Brain microvascular endothelial cell (primary cell): ENCODE measurements at regions of chr5 and their contacts with region 1.

Region 1: DNA sequence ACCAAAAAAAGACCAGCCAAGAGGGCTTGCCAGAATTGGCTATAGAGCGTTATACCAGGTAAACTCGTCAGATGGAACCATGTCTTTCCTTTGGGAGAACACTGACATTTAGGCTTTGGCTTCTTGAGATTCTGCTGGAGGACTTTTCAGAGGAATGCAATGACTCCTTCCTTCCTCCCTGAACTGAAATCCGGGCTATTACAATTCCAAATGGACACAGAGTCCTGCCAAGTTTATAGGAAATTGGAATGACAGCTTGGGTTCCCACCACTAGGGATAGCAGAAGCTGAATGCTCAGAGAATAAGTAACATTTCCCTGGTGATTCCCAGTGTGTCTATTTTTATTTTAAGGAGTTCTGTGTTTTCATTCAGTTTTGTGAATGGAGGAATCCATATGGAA is 143.0 kb downstream of the FGF1 start:
- DNase-seq: no peak
- H3K4me3 ChIP-seq: no peak overlapping the region
- H3K27ac ChIP-seq: no peak overlapping the region
- H3K27me3 ChIP-seq: no peaks in the 10 kb centered on the region
- CTCF ChIP-seq: peak; percentile 37

Region 2: DNA sequence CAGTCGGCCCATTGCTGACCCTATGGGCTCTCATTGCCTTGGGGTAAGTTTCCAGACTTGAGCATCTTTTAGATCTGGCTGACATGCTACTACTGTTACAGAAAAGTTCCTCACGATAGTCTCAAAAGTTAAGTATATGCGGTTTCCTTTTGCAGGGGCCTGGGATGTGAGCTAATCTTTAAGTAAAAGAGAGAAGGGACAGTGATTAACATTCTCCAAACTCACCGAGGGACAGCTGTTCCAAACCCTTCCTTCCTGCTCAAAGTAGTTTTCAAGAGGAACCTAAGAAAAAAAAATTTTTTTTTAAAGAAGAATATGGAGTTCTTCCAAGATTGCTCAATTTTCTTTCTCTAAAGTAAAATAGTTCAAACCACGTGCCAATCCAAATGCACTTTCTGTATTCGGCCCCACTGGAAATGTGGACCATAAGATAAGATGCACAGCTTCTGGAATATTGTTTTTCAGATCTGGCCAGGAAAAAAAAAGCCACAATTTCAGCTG is 50.1 kb before region 1 on chr5:
- in situ Hi-C with region 1: loop called (anchors 5 kb)
- DNase-seq: no peak
- H3K4me3 ChIP-seq: no peak overlapping the region
- H3K27ac ChIP-seq: no peak overlapping the region
- H3K27me3 ChIP-seq: no peaks in the 10 kb centered on the region
- CTCF ChIP-seq: no peak

Region 3: GRCh38 chr5:142674531-142675469 is 131.9 kb after region 1 on chr5:
- in situ Hi-C with region 1: no loop called
- DNase-seq: peak; percentile 77
- H3K4me3 ChIP-seq: no peak overlapping the region
- H3K27ac ChIP-seq: no peak overlapping the region
- H3K27me3 ChIP-seq: no peaks in the 10 kb centered on the region
- CTCF ChIP-seq: no peak